ENCODE measurements at regions of chr4 and their contacts with region 1.

Region 1: GRCh38 chr4:75673027-75673958 is at the start of gene G3BP2:
- DNase-seq: peak; percentile 98
- H3K4me3 Mint-ChIP-seq: peak within 1 kb of the TSS; percentile 97
- H3K27ac Mint-ChIP-seq: peak within 1 kb of the TSS; percentile 99
- H3K4me1 Mint-ChIP-seq: peaks cover 48% of the 10 kb centered on the region
- H3K27me3 Mint-ChIP-seq: no peaks in the 10 kb centered on the region
- total RNA-seq, gene G3BP2: 185 to 187 TPM

Region 2: DNA sequence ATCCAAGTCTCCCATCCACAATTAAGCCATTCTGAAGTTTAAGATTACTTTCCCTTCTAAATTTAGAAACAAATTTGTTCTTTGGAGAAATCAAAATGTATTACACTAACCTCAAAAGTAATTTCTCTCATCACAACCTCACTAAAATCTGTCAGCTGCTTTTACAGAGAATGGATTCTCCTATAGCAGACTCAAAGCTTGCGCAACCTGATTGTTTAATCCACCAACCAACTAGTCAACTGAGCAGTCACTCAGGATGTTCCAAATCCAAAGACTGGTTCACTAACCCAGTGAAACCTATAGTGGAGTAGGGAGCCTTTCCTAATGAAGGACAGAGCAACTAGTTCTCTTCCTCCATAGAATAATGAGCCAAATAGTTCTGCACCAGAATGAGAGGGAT is 203.4 kb before region 1 on chr4:
- CTCF ChIA-PET with region 1: no interaction called
- POLR2A ChIA-PET with region 1: no interaction called
- DNase-seq: no peak
- H3K4me3 Mint-ChIP-seq: no peak overlapping the region
- H3K27ac Mint-ChIP-seq: no peak overlapping the region
- H3K4me1 Mint-ChIP-seq: no peaks in the 10 kb centered on the region
- H3K27me3 Mint-ChIP-seq: no peaks in the 10 kb centered on the region

Region 3: DNA sequence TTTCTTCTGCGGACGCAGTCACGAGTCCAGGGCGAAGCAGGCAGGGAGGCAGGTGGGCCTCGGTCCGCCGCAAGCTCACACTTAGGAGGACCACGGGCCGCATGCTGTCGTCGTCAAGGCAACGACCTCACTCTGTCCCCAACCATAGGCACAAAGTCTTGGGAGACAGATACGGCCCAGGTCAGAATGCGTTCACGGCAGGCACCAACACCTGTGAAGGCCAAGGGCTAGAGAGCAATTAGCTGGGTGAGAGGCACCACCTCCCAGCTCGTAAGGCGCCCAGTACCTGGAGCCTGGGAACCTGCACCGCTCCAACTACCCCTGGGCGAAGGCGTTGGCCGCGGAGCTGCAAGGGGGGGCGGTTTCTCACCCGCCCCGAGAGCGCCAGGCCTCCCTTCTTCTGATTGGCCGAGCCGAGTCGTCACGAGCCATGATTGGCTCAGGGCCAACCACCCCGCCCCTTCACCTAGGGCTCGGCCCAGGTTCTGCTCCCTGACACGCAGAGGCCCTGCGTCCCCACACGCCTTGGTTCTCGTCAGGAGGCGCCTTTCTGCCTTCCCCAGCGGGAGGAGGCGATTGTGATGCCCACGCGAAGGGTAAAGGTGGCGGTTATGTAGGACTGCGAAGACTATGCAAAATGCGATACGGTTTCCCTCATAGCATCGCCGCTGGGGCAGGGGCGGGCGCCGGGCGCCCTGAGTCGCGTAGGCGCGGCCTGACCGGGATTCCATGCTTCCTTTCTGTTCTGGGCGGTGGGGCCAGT is 42.9 kb before region 1 on chr4 and contains the start of gene CDKL2:
- CTCF ChIA-PET with region 1: no interaction called
- POLR2A ChIA-PET with region 1: interaction called, 15 read pairs
- DNase-seq: peak; percentile 92
- H3K4me3 Mint-ChIP-seq: peak within 1 kb of the TSS; percentile 84
- H3K27ac Mint-ChIP-seq: peak within 1 kb of the TSS; percentile 57
- H3K4me1 Mint-ChIP-seq: peaks cover 18% of the 10 kb centered on the region
- H3K27me3 Mint-ChIP-seq: no peaks in the 10 kb centered on the region
- total RNA-seq, gene CDKL2: 1.3 to 1.4 TPM

Region 4: GRCh38 chr4:75653845-75654503 is 19.3 kb before region 1 on chr4:
- CTCF ChIA-PET with region 1: interaction called, 7 read pairs
- POLR2A ChIA-PET with region 1: interaction called, 278 read pairs
- DNase-seq: no peak
- H3K4me3 Mint-ChIP-seq: peak overlapping the region; percentile 43
- H3K27ac Mint-ChIP-seq: peak overlapping the region; percentile 90
- H3K4me1 Mint-ChIP-seq: peaks cover 71% of the 10 kb centered on the region
- H3K27me3 Mint-ChIP-seq: no peaks in the 10 kb centered on the region

Region 5: DNA sequence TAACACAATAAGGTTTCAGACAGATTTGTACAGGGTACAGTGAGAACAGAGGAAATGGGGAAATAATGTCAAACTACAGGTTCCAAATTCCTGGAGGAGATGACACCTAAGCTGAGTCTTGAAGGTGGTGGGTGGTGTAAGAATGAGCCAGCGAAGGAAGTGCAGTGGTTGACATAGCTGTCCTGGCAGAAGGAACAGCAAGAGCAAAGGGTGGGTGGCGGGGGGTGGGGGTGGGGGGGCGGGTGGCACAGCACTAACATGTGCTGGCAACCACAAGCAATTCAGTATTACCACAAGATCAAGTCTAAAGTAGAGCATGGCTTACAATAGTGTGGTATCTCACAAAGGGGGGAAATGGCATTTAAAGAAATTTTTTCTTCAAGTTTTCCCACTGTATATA is 13.1 kb after region 1 on chr4:
- CTCF ChIA-PET with region 1: interaction called, 7 read pairs
- POLR2A ChIA-PET with region 1: interaction called, 31 read pairs
- DNase-seq: no peak
- H3K4me3 Mint-ChIP-seq: no peak overlapping the region
- H3K27ac Mint-ChIP-seq: peak overlapping the region; percentile 5
- H3K4me1 Mint-ChIP-seq: peaks cover 34% of the 10 kb centered on the region
- H3K27me3 Mint-ChIP-seq: no peaks in the 10 kb centered on the region

Region 6: GRCh38 chr4:75698162-75698962 is 25.1 kb after region 1 on chr4:
- CTCF ChIA-PET with region 1: no interaction called
- POLR2A ChIA-PET with region 1: interaction called, 12 read pairs
- DNase-seq: peak; percentile 32
- H3K4me3 Mint-ChIP-seq: peak overlapping the region; percentile 15
- H3K27ac Mint-ChIP-seq: peak overlapping the region; percentile 78
- H3K4me1 Mint-ChIP-seq: peaks cover 22% of the 10 kb centered on the region
- H3K27me3 Mint-ChIP-seq: no peaks in the 10 kb centered on the region

Region 7: GRCh38 chr4:75786526-75786925 is 113.2 kb after region 1 on chr4:
- CTCF ChIA-PET with region 1: no interaction called
- POLR2A ChIA-PET with region 1: no interaction called
- DNase-seq: no peak
- H3K4me3 Mint-ChIP-seq: no peak overlapping the region
- H3K27ac Mint-ChIP-seq: no peak overlapping the region
- H3K4me1 Mint-ChIP-seq: peaks cover 4% of the 10 kb centered on the region
- H3K27me3 Mint-ChIP-seq: no peaks in the 10 kb centered on the region

Measured in activated CD4-positive, alpha-beta memory T cell treated with anti-CD3 and anti-CD28 coated beads, Interleukin-2, amount 10 ng/mL, durations not matched to agents 7 days and 5 days (primary cell).